Activated CD4-positive, alpha-beta T cell treated with anti-CD3 and anti-CD28 coated beads, Interleukin-2, amount 10 ng/mL, durations not matched to agents 24 days and 14 days (primary cell): ENCODE measurements at regions of chr12 and their contacts with region 1.

Region 1: DNA sequence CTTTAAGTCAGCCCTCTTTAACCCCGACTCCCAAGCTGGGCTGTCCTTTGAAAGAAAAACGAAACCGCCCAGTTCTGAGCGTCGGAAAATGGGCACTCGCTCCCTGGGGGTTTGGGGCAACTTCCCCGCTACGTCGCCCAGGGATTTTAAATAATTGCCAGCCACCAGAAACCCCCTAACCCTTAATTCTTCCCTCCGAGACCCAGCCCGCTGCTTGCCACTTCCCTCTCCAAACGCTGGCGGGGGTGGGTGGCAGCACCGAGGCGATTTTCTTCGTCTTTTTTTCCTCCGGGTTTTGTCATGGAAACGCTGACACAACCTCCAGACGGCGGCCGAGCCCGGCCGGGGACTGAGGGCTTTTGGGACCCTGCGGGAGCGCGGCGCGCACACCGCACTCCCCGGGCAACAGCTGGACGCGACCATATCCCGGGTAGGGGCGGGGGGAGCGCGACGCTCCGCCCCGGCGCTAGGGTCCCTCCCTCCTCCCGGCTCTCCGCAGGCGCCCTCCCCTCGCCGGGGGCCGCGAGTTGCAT is at the start of gene CHST11:
- DNase-seq: peak; percentile 94
- H3K4me3 Mint-ChIP-seq: peak within 1 kb of the TSS; percentile 99
- H3K27ac Mint-ChIP-seq: peak within 1 kb of the TSS; percentile 97
- H3K4me1 Mint-ChIP-seq: peaks cover 40% of the 10 kb centered on the region
- H3K27me3 Mint-ChIP-seq: peaks cover 2% of the 10 kb centered on the region
- total RNA-seq, gene CHST11: 44.9 and 46.2 TPM in 2 replicates

Region 2: GRCh38 chr12:104485651-104486362 is 29.3 kb after region 1 on chr12:
- intact Hi-C with region 1: loop called (anchors 2 kb)
- DNase-seq: peak; percentile 85
- H3K4me3 Mint-ChIP-seq: peak overlapping the region; percentile 62
- H3K27ac Mint-ChIP-seq: peak overlapping the region; percentile 83
- H3K4me1 Mint-ChIP-seq: peaks cover 84% of the 10 kb centered on the region
- H3K27me3 Mint-ChIP-seq: no peaks in the 10 kb centered on the region

Region 3: DNA sequence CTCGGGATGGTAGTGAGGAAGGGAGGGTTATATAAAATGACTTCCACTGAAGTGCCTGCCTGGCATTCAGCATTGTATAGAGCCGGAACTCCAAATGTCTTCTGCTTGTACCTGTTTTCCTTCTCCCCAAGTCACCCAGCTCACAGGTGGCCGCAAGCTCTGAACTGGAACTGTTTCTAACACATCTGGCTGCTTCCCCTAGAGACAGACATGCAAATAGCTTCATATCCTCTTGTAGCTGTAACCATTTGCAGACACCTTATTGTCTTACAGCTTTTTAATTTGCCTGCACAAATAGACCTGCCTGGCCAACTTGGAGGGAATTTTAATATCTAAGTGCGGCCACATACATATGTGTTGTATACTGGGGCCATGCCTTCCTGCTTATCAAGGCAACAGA is 126.3 kb after region 1 on chr12:
- intact Hi-C with region 1: loop called (anchors 5 kb)
- DNase-seq: no peak
- H3K4me3 Mint-ChIP-seq: no peak overlapping the region
- H3K27ac Mint-ChIP-seq: no peak overlapping the region
- H3K4me1 Mint-ChIP-seq: peaks cover 58% of the 10 kb centered on the region
- H3K27me3 Mint-ChIP-seq: no peaks in the 10 kb centered on the region

Region 4: GRCh38 chr12:104695453-104696148 is 239.1 kb after region 1 on chr12:
- intact Hi-C with region 1: loop called (anchors 2 kb)
- DNase-seq: peak; percentile 90
- H3K4me3 Mint-ChIP-seq: peak overlapping the region; percentile 68
- H3K27ac Mint-ChIP-seq: peak overlapping the region; percentile 96
- H3K4me1 Mint-ChIP-seq: peaks cover 66% of the 10 kb centered on the region
- H3K27me3 Mint-ChIP-seq: peaks cover 2% of the 10 kb centered on the region

Region 5: GRCh38 chr12:105107494-105108371 is 651.2 kb after region 1 on chr12 and contains the start of gene WASHC4:
- intact Hi-C with region 1: loop called (anchors 5 kb)
- DNase-seq: peak; percentile 99
- H3K4me3 Mint-ChIP-seq: peak within 1 kb of the TSS; percentile 96
- H3K27ac Mint-ChIP-seq: peak within 1 kb of the TSS; percentile 96
- H3K4me1 Mint-ChIP-seq: peaks cover 33% of the 10 kb centered on the region
- H3K27me3 Mint-ChIP-seq: peaks cover 25% of the 10 kb centered on the region
- total RNA-seq, gene WASHC4: 31.5 and 36.5 TPM in 2 replicates